Mucosa of descending colon (tissue), 3 donors: ENCODE measurements at regions of chr9 and their contacts with region 1.

Region 1: DNA sequence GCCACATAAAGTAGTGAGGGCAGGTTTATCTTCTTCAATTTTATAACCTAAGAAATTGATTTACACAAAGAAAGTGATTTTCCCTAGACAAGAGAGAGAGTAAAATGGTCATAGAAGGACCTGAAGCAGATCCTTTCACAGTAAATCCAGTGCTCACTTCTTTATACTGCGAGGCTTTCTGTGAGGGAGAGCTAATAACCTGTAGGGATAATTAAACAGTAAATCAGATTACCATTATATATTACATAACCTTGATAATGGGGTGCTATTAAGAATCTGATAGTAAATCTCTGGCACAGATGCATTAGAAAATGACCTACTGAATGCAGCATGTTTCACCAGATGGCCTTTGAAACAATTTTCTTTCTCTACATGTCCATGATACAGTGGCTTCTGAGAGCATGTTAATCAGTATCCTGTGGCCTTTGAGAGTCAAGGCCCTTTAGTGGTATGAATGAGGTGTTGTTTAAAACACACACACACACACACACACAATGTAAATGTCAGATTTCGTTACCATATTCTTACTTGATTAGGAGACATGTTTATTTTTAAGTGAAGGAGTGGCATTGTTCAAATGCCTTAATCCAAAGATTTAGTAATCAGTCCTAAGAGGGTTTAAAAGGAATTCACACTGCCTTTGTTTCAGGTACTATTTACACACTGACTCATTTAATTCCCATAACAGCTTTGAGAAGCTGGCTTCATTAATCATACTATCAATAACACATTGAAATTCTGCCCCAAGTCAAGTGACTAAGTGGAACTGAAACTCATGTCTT is 124.7 kb downstream of the ALDH1A1 start:
- DNase-seq: no peak
- ATAC-seq: peak; percentile 46
- H3K4me3 ChIP-seq: no peak overlapping the region
- H3K4me1 ChIP-seq: peaks cover 6% of the 10 kb centered on the region
- CTCF ChIP-seq: no peak

Region 2: GRCh38 chr9:72271613-72272478 is 556.3 kb before region 1 on chr9:
- intact Hi-C with region 1: loop called in 1 of 2 experiments (anchors 10 kb)
- DNase-seq: peak in 1 of 3 donors; percentile 88
- ATAC-seq: peak; percentile 72
- H3K4me3 ChIP-seq: no peak overlapping the region
- H3K4me1 ChIP-seq: no peaks in the 10 kb centered on the region
- CTCF ChIP-seq: peak; percentile 48

Region 3: DNA sequence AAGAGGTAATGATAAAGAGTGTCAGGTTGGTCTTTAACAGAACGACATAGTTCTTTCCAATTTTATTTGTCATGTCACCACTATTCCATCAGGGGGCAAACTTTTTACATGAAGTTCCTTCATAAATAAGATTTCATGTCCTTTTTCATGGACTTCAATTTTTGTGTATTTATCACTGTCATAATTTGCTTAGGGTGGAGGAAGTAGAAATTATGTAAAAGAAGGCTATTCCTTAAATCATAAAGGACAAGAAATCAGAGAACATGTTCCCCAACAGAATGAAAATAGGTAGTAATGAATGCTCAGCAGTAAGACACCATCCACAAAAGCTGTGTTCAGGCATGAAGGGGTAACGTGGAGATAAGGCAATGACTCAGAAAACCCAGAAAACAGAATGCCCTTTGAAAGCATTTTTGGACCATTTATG is 535.9 kb before region 1 on chr9:
- intact Hi-C with region 1: loop called in 1 of 2 experiments (anchors 5 kb)
- DNase-seq: no peak
- ATAC-seq: no peak
- H3K4me3 ChIP-seq: no peak overlapping the region
- H3K4me1 ChIP-seq: peaks cover 7% of the 10 kb centered on the region
- CTCF ChIP-seq: no peak

Region 4: DNA sequence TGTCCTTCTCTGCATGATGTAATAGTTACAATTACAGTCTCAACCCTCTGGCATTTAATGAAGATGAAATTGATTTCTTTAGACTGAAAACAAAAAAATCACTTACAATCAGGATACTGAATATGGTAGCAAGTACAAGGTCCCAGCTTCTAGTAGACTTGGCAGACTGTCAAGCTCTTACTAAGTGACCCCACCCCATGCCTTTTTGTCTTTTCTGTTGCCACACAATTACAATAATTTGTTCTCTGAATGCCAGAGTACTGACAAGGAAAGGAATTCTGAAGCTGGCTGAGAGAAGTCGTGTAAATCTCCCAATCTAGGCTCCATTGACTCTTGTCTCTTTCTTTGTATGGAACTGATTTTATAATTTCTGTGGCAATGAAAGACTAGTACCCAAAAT is 152.6 kb before region 1 on chr9:
- intact Hi-C with region 1: no loop called
- DNase-seq: no peak
- ATAC-seq: no peak
- H3K4me3 ChIP-seq: no peak overlapping the region
- H3K4me1 ChIP-seq: no peaks in the 10 kb centered on the region
- CTCF ChIP-seq: no peak

Region 5: DNA sequence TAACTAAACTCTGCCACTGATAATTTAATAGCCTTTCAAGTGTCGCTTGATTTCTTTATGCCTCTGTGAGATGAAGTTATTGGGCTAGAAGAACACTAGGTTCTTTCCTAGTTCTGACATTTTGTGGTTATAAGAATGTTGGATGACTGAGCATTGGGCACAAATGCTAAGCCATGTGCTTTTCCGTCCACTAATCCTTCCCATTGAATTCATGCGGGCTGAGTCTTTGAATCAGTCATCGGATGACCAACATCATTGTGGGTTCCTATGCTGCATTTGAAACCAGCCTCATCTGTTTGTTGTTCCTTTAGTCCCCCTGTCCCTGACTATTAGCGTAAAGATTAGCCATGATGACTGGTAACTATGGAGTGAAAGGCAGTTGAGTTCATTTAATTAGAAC is 66.2 kb after region 1 on chr9:
- intact Hi-C with region 1: no loop called
- DNase-seq: no peak
- ATAC-seq: no peak
- H3K4me3 ChIP-seq: no peak overlapping the region
- H3K4me1 ChIP-seq: no peaks in the 10 kb centered on the region
- CTCF ChIP-seq: no peak